CD8-positive, alpha-beta T cell (primary cell): ENCODE measurements at regions of chr14 and their contacts with region 1.

Region 1: GRCh38 chr14:23320774-23321571 is at the start of gene PABPN1:
- DNase-seq: peak; percentile 93 to 100 (median 97)
- ATAC-seq: peak; percentile 85
- H3K4me3 ChIP-seq: peak within 1 kb of the TSS; percentile 67 to 79
- H3K4me3 Mint-ChIP-seq: peak within 1 kb of the TSS; percentile 91
- H3K27ac ChIP-seq: peak within 1 kb of the TSS; percentile 80 to 96
- H3K27ac Mint-ChIP-seq: peak within 1 kb of the TSS; percentile 99
- H3K4me1 ChIP-seq: peaks cover 23% of the 10 kb centered on the region
- H3K4me1 Mint-ChIP-seq: peaks cover 29% of the 10 kb centered on the region
- H3K27me3 ChIP-seq: no peaks in the 10 kb centered on the region
- H3K27me3 Mint-ChIP-seq: no peaks in the 10 kb centered on the region
- CTCF ChIP-seq: no peak
- total RNA-seq, gene PABPN1: 186 to 191 TPM

Region 2: GRCh38 chr14:22918804-22919600 is 402.0 kb before region 1 on chr14 and contains the start of gene RBM23:
- CTCF ChIA-PET with region 1: no interaction called
- POLR2A ChIA-PET with region 1: no interaction called
- intact Hi-C with region 1: loop called in 1 of 2 experiments (anchors 1 kb)
- DNase-seq: peak; percentile 98 to 100 (median 100)
- ATAC-seq: peak; percentile 91
- H3K4me3 ChIP-seq: peak within 1 kb of the TSS; percentile 59 to 88
- H3K4me3 Mint-ChIP-seq: peak within 1 kb of the TSS; percentile 91
- H3K27ac ChIP-seq: peak within 1 kb of the TSS; percentile 100
- H3K27ac Mint-ChIP-seq: peak within 1 kb of the TSS; percentile 99
- H3K4me1 ChIP-seq: peaks cover 30% of the 10 kb centered on the region
- H3K4me1 Mint-ChIP-seq: peaks cover 42% of the 10 kb centered on the region
- H3K27me3 ChIP-seq: no peaks in the 10 kb centered on the region
- H3K27me3 Mint-ChIP-seq: no peaks in the 10 kb centered on the region
- CTCF ChIP-seq: no peak
- total RNA-seq, gene RBM23: 135 to 141 TPM

Region 3: DNA sequence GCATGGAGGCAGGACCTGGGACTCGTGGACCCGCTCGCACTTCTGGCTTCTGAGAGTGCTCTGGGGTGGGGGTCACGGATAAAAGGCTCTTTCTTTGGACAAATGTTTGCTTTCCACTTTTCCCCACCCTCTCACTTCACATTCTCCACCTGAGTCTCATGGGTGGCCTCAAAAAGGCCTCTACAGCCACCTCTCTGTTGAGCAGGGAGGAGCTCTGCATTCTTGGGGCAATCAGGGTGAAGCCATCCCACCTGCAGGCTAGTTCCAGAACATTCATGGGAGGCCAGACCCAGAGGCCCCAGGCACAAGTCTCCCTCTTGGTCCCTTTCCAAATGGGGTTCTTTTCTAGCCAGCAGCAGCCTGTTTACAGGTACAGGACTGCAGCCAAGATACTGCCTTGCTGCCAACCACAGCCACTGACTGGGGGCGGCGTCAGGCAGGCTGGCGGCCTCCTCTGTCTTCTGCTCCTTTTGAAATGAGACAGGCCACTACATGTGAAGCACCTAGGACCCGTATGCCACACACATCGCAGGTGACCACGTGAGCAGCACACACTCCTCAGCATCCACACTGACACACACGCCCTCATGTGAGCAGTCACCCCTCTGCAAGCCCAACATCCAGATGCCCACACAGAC is 183.7 kb before region 1 on chr14:
- CTCF ChIA-PET with region 1: no interaction called
- POLR2A ChIA-PET with region 1: no interaction called
- intact Hi-C with region 1: no loop called
- DNase-seq: no peak
- ATAC-seq: no peak
- H3K4me3 ChIP-seq: no peak overlapping the region
- H3K4me3 Mint-ChIP-seq: no peak overlapping the region
- H3K27ac ChIP-seq: no peak overlapping the region
- H3K27ac Mint-ChIP-seq: no peak overlapping the region
- H3K4me1 ChIP-seq: no peaks in the 10 kb centered on the region
- H3K4me1 Mint-ChIP-seq: no peaks in the 10 kb centered on the region
- H3K27me3 ChIP-seq: no peaks in the 10 kb centered on the region
- H3K27me3 Mint-ChIP-seq: peaks cover 2% of the 10 kb centered on the region
- CTCF ChIP-seq: no peak

Region 4: DNA sequence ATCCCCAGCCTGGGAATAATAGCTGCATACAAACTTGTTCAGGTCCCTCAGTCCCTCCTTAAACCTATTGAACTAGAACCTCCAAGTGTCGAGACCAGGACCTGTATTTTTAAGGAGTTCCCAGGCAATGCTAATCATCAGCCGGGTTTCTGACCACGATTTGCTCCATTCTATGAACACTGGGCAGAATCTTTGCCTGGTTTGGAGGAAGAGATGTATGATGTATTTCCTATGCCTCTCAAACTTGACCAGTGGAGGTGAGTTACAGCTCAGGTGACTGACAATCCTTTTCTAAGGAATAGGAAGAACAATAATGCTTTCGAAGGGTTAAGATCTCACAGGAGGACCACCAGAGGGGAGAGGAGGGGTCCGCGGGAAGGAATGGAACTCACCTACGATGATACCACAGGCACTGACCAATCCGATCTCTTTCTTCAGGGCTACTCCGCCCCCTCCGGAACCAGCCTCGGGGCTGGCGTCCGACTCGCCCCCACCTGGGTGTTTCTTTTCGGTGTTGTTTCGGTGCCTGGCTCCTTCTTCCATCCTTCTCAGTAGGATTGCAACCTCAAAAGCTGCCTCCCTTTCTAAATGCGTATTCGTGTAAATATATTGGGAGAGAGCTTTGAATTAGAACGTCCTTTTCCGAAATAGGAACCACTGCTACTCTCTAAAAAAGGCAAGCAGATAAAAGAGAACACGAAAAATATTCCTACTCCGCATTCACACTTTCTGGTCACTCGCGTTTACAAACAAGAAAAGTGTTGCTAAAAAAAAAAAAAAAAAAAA is 138.4 kb before region 1 on chr14:
- CTCF ChIA-PET with region 1: no interaction called
- POLR2A ChIA-PET with region 1: no interaction called
- intact Hi-C with region 1: no loop called
- DNase-seq: peak in 6 of 9 experiments; percentile 27 to 63 (median 41)
- ATAC-seq: peak; percentile 65
- H3K4me3 ChIP-seq: peak overlapping the region; percentile 59 to 83
- H3K4me3 Mint-ChIP-seq: no peak overlapping the region
- H3K27ac ChIP-seq: peak overlapping the region in 1 of 2 experiments; percentile 19
- H3K27ac Mint-ChIP-seq: no peak overlapping the region
- H3K4me1 ChIP-seq: peaks cover 25% of the 10 kb centered on the region
- H3K4me1 Mint-ChIP-seq: peaks cover 27% of the 10 kb centered on the region
- H3K27me3 ChIP-seq: peaks cover 0 to 4% of the 10 kb centered on the region in 2 experiments
- H3K27me3 Mint-ChIP-seq: peaks cover 15% of the 10 kb centered on the region
- CTCF ChIP-seq: no peak

Region 5: DNA sequence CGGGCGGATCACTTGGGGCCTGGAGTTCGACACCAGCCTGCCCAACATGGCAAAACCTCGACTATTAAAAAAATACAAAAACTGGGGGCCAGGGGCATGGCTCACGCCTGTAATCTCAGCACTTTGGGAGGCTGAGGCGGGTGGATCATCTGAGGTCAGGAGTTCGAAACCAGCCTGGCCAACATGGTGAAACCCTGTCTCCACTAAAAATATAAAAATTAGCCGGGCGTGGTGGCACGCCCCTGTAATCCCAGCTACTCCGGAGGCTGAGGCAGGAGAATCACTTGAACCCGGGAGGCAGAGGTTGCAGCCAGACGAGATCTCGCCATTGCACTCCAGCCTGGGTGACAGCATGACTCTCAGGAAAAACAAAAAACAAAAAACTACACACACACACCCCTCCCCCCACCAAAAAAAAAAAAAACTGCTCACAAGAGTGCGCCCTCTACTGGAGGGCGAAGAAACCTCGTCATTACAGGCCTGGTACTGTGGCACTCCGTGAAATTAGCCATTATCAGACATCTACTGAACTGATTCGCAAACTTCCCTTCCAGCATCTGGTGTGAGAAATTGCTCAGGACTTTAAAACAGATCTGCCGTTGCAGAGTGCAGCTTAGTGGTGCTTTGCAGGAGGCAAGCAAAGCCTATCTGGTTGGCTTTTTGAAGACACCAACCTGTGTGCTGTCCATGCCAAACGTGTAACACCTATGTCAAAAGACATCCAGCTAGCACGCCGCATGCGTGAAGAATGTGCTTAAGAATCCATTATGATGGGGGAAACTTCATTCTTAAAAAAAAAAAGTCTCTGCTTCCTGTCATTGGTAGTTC is 26.0 kb before region 1 on chr14:
- CTCF ChIA-PET with region 1: interaction called, 53 read pairs
- POLR2A ChIA-PET with region 1: interaction called, 202 read pairs
- intact Hi-C with region 1: no loop called
- DNase-seq: peak in 8 of 9 experiments; percentile 37 to 86 (median 60)
- ATAC-seq: peak; percentile 90
- H3K4me3 ChIP-seq: no peak overlapping the region
- H3K4me3 Mint-ChIP-seq: peak overlapping the region; percentile 47
- H3K27ac ChIP-seq: no peak overlapping the region
- H3K27ac Mint-ChIP-seq: peak overlapping the region; percentile 45
- H3K4me1 ChIP-seq: peaks cover 14% of the 10 kb centered on the region
- H3K4me1 Mint-ChIP-seq: peaks cover 22% of the 10 kb centered on the region
- H3K27me3 ChIP-seq: no peaks in the 10 kb centered on the region
- H3K27me3 Mint-ChIP-seq: no peaks in the 10 kb centered on the region
- CTCF ChIP-seq: peak; percentile 82

Region 6: DNA sequence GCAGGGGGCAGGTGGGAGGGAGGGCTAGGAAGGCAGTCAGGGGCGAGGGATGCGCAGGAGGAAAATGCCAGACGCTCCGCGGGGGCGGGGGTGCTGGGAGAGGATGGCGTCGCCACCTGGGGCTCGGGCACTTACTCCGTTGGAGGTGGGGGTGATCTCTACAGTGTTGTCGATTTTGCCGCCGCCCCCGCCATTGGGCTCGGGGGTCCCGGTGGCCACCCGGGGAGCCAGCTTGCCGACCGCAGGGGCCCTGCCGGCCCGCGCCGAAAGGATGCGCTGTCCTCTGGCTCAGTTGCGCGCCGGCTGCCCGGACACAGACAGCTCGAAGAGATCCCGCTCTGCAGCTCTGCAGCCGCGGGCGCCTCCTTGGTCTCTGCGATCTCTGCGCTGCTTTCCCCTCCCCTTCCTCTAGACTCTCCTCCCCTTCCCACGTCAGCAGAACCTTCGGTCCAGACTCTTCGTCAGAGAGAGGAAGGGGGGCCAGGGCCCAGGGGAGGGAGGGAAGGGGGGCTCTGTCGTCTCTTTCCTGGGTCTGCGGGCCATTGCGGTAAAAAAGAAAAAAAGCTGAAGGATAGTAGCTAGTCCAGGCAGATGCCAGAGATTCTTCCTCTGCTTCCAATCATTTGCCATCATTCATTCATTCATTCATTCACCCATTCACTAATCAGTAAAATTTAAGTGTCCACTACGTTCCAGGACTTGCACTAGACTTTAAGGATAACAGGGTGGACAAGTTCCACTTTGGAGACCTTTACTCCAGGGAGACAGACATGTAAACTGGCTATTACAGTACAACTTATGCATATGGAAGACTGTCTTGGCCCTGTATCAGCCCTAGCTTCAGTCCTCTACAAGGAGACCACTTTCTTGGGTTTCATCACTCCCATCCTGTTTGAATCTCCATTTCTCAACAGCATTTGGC is 31.8 kb after region 1 on chr14 and contains the start of gene SLC22A17:
- CTCF ChIA-PET with region 1: interaction called, 4 read pairs
- POLR2A ChIA-PET with region 1: interaction called, 10 read pairs
- intact Hi-C with region 1: no loop called
- DNase-seq: peak; percentile 28 to 80 (median 70)
- ATAC-seq: peak; percentile 95
- H3K4me3 ChIP-seq: peak within 1 kb of the TSS; percentile 44 to 55
- H3K4me3 Mint-ChIP-seq: peak within 1 kb of the TSS; percentile 77
- H3K27ac ChIP-seq: peak within 1 kb of the TSS in 1 of 2 experiments; percentile 3
- H3K27ac Mint-ChIP-seq: peak within 1 kb of the TSS; percentile 34
- H3K4me1 ChIP-seq: peaks cover 8% of the 10 kb centered on the region
- H3K4me1 Mint-ChIP-seq: peaks cover 10% of the 10 kb centered on the region
- H3K27me3 ChIP-seq: peaks cover 0 to 2% of the 10 kb centered on the region in 2 experiments
- H3K27me3 Mint-ChIP-seq: peaks cover 37% of the 10 kb centered on the region
- CTCF ChIP-seq: no peak
- total RNA-seq, gene SLC22A17: 12.3 to 13.5 TPM

Region 7: DNA sequence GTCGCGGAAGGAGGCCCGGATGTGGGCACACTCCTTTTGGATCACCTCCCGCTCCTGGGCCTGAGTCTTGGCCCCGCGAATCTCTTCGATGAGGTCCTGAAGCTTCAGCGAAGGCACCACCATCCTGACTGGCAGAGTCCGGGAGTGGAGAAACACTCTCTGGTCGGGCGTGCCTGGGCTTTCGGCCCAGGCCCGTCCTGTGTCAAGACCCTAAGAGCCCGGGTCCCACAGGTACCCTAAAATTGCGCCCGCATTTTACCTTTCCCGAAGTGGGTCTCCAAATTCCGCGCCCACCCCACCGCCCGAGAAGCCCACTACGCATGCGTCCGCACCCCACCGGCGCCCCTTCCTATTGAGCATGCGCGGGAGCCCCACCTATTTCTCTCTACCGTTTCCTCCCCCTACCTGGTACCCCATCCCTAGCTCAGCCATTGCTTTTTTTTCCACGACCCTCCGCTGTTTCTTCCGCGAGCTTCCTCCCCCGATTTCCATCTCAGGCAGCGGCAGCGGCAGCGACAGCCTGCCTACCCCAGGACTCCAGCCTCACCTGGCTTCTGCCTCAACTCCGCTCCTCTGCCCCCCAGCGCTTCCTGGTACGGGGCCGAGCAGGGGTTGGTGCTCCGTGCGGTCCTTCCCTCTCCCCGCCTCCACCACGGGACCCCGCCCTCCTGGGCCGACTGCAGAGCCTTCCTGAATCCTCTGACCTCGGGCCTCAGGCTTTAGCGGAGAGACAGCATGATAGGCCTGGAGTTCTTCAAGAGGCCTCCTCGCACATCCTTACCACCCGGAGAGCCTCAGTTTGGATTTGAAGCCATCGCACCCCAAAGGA is 246.4 kb after region 1 on chr14 and contains the start of gene AP1G2:
- CTCF ChIA-PET with region 1: no interaction called
- POLR2A ChIA-PET with region 1: no interaction called
- intact Hi-C with region 1: loop called in 1 of 2 experiments (anchors 1 kb)
- DNase-seq: peak; percentile 66 to 92 (median 84)
- ATAC-seq: peak; percentile 90
- H3K4me3 ChIP-seq: peak within 1 kb of the TSS; percentile 75 to 97
- H3K4me3 Mint-ChIP-seq: peak within 1 kb of the TSS; percentile 99
- H3K27ac ChIP-seq: peak within 1 kb of the TSS; percentile 86
- H3K27ac Mint-ChIP-seq: peak within 1 kb of the TSS; percentile 97
- H3K4me1 ChIP-seq: peaks cover 20% of the 10 kb centered on the region
- H3K4me1 Mint-ChIP-seq: peaks cover 44% of the 10 kb centered on the region
- H3K27me3 ChIP-seq: no peaks in the 10 kb centered on the region
- H3K27me3 Mint-ChIP-seq: peaks cover 1% of the 10 kb centered on the region
- CTCF ChIP-seq: no peak
- total RNA-seq, gene AP1G2: 153 to 160 TPM

Region 8: GRCh38 chr14:23610090-23610814 is 289.3 kb after region 1 on chr14:
- CTCF ChIA-PET with region 1: no interaction called
- POLR2A ChIA-PET with region 1: no interaction called
- intact Hi-C with region 1: no loop called
- DNase-seq: peak in 4 of 9 experiments; percentile 15 to 57 (median 46)
- ATAC-seq: peak; percentile 67
- H3K4me3 ChIP-seq: no peak overlapping the region
- H3K4me3 Mint-ChIP-seq: peak overlapping the region; percentile 71
- H3K27ac ChIP-seq: peak overlapping the region; percentile 38 to 75
- H3K27ac Mint-ChIP-seq: peak overlapping the region; percentile 90
- H3K4me1 ChIP-seq: peaks cover 25% of the 10 kb centered on the region
- H3K4me1 Mint-ChIP-seq: peaks cover 44% of the 10 kb centered on the region
- H3K27me3 ChIP-seq: no peaks in the 10 kb centered on the region
- H3K27me3 Mint-ChIP-seq: no peaks in the 10 kb centered on the region
- CTCF ChIP-seq: no peak